Left ventricle myocardium inferior (tissue), 1 donor: ENCODE measurements at regions of chr2 and their contacts with region 1.

Region 1: DNA sequence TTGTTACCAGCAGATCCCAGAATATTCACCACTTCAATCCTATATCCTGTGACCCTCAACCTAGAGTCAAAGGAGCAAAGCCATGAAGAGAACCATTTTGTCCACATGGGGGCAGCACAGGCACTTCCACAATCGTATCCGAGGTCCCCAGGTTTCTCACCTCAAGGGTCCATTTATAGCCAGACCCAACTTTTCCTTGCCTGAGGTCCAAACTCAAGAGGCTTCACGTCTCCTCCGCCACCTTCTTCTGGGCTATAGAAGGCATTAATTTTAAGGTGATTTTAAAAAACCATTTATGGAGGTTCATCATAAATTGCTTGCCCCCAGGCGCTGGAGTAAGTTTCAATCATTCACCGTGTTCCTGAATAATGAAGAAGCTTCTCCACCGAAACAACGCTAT is 111.6 kb upstream of the NABP1 start:
- DNase-seq: peak; percentile 23
- H3K4me3 ChIP-seq: no peak overlapping the region
- H3K27ac ChIP-seq: no peak overlapping the region
- H3K4me1 ChIP-seq: no peaks in the 10 kb centered on the region
- H3K27me3 ChIP-seq: peaks cover 53% of the 10 kb centered on the region
- CTCF ChIP-seq: peak; percentile 79

Region 2: DNA sequence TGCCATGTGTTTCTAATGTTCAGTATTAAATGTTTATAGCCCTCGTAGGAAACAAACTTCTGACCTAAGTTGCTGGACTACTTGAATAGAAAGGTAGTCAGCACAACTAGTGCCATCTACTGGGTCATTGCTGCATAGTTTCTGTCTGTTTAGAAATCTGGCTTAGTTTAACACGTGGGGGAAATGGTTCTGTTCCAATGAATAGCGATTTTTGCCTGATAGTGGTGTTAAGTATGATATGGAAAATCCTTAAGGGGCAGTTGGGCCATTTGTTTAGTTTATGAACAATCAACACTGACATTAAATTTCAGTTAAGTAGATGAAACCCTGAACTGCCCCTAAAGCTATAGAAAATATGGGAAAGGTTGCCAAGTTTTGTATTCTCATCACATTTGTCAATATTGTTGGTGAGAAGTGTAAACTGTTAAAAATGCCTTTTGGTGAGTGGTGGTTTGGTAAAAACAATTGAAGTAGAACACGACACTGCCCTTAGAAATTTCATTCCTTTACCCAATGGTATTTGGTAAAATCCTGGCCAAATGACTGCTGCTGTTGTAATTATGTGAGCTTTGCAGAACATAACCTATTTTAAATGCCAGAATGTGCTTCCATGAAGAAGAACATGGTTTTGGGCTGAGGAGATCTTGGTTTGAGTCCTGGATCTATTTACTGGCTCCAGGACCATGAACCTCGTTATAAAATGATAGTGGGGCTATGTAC is 124.8 kb after region 1 on chr2:
- intact Hi-C with region 1: loop called (anchors 5 kb)
- DNase-seq: no peak
- H3K4me3 ChIP-seq: no peak overlapping the region
- H3K27ac ChIP-seq: no peak overlapping the region
- H3K4me1 ChIP-seq: peaks cover 13% of the 10 kb centered on the region
- H3K27me3 ChIP-seq: peaks cover 26% of the 10 kb centered on the region
- CTCF ChIP-seq: peak; percentile 81

Region 3: GRCh38 chr2:191866675-191867506 is 300.5 kb after region 1 on chr2:
- intact Hi-C with region 1: no loop called
- DNase-seq: no peak
- H3K4me3 ChIP-seq: peak overlapping the region; percentile 29
- H3K27ac ChIP-seq: peak overlapping the region; percentile 91
- H3K4me1 ChIP-seq: peaks cover 80% of the 10 kb centered on the region
- H3K27me3 ChIP-seq: no peaks in the 10 kb centered on the region
- CTCF ChIP-seq: no peak